ENCODE measurements at regions of chr4 and their contacts with region 1.

Region 1: DNA sequence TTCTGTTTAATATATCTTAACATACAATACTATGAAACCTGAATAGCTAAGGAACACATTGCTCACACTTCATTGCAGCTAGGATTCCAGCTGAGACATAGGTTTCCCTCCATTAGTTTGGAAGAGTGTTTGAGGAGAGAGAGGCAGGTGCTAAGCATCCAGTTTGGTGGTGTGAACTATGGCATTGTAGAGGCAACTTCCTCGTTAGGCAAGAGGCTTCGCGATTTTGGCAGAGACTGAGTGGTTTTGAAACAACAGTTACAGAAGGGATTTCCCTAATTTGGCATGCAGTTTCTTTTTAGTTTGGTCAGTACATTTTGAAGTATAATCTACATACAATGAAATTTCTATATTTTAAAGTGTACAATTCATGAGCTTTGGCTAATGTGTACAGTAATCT is 117.1 kb upstream of the BMP3 start:
- DNase-seq: no peak
- H3K4me3 ChIP-seq: no peak overlapping the region
- H3K27ac ChIP-seq: no peak overlapping the region
- H3K4me1 ChIP-seq: no peaks in the 10 kb centered on the region
- H3K27me3 ChIP-seq: no peaks in the 10 kb centered on the region
- CTCF ChIP-seq: no peak
- POLR2A ChIP-seq: no peak

Region 2: GRCh38 chr4:79695848-79696247 is 1217.5 kb before region 1 on chr4:
- intact Hi-C with region 1: loop called (anchors 10 kb)
- DNase-seq: no peak
- H3K4me3 ChIP-seq: no peak overlapping the region
- H3K27ac ChIP-seq: no peak overlapping the region
- H3K4me1 ChIP-seq: no peaks in the 10 kb centered on the region
- H3K27me3 ChIP-seq: no peaks in the 10 kb centered on the region
- CTCF ChIP-seq: no peak
- POLR2A ChIP-seq: no peak